Activated naive CD4-positive, alpha-beta T cell treated with anti-CD3 and anti-CD28 coated beads for 36 hours (primary cell): ENCODE measurements at regions of chr16 and their contacts with region 1.

Region 1: DNA sequence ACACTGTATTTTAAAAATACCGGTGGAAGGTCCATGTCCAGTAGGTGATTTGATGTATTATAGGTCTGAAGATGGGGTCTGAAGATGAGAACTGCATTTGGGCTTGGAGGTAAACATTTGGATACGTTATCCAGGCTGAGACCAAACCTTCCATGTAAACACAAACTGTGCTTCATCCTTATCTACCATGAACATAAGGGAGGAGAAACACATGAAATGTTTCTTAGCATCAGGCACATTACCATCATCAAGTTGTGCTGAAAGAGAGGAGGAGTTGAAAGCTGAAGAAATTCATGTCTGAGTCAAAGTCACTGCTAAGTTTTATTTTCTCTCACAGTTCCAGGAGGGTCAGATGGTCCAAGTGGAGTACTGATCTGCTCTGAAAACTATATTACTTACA is 11.4 kb downstream of the SF3B3 start:
- DNase-seq: no peak
- H3K4me3 Mint-ChIP-seq: no peak overlapping the region
- H3K27ac Mint-ChIP-seq: peak overlapping the region; percentile 11
- H3K4me1 Mint-ChIP-seq: peaks cover 33% of the 10 kb centered on the region
- H3K27me3 Mint-ChIP-seq: no peaks in the 10 kb centered on the region

Region 2: DNA sequence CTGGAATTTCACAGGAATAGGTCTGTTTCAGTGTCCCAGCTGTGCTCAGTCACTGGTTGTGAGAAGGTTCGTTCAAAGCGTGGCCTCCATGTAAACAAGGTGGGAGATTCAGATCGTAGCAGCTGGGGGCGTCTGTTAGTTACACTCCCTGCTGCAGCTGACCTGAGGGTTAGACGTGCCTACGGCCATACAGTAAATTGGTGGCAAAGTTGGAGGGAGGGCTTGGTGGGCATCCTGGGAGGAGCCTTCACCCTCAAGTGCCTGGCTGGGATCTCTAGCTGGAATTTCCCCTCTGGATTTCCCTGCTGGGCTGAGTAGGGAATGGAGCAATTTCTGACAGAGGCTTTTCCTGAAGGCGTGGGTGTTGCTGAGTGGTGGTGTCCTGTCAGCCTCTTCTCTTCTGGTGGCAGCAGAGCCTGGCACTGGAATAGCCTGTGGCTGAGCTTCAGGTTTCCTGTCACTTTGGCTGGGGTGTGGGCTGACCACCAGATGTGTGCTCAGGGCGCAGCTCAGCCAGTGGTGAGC is 74.2 kb before region 1 on chr16:
- CTCF ChIA-PET with region 1: no interaction called
- intact Hi-C with region 1: no loop called
- DNase-seq: no peak
- H3K4me3 Mint-ChIP-seq: no peak overlapping the region
- H3K27ac Mint-ChIP-seq: no peak overlapping the region
- H3K4me1 Mint-ChIP-seq: peaks cover 6% of the 10 kb centered on the region
- H3K27me3 Mint-ChIP-seq: no peaks in the 10 kb centered on the region

Region 3: DNA sequence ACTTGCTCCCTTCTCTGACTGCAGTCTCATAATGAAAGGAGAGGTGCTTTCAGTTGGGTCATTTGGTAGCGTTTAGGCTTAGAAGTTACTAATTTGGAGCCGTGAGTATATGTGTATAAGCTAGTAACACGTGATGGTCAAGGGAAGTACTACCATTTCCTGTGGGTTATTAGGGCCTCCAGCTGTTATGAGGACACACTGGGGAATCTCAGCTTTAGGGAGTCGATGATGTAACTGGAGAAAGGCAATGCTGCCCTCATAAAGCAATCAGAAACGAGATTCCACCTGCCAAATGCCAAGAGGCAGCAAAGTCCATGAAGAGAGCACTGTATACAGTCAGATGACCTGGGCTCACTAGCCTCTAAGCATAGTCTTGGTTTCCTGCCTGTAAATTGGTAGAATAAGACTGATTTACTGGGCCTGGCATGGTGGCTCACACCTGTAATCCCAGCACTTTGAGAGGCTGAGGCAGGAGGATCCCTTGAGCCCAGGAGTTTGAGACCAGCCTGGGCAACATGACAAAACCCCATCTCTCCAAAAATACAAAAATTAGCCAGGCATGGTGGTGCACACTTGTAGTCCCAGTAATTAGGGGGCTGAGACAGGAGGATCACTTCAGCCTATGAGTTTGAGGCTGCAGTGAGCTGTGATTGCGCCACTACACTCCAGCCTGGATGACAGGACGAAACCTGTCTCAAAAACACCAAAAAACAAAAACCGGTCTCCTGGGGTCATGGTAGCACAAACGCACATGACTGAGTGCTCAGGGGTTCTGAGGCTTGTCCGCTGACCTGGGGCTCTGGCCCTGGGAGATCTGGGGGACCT is 41.7 kb after region 1 on chr16:
- CTCF ChIA-PET with region 1: no interaction called
- intact Hi-C with region 1: loop called (anchors 5 kb)
- DNase-seq: no peak
- H3K4me3 Mint-ChIP-seq: no peak overlapping the region
- H3K27ac Mint-ChIP-seq: peak overlapping the region; percentile 38
- H3K4me1 Mint-ChIP-seq: peaks cover 20% of the 10 kb centered on the region
- H3K27me3 Mint-ChIP-seq: no peaks in the 10 kb centered on the region